ENCODE measurements at regions of chr14 and their contacts with region 1.

Region 1: DNA sequence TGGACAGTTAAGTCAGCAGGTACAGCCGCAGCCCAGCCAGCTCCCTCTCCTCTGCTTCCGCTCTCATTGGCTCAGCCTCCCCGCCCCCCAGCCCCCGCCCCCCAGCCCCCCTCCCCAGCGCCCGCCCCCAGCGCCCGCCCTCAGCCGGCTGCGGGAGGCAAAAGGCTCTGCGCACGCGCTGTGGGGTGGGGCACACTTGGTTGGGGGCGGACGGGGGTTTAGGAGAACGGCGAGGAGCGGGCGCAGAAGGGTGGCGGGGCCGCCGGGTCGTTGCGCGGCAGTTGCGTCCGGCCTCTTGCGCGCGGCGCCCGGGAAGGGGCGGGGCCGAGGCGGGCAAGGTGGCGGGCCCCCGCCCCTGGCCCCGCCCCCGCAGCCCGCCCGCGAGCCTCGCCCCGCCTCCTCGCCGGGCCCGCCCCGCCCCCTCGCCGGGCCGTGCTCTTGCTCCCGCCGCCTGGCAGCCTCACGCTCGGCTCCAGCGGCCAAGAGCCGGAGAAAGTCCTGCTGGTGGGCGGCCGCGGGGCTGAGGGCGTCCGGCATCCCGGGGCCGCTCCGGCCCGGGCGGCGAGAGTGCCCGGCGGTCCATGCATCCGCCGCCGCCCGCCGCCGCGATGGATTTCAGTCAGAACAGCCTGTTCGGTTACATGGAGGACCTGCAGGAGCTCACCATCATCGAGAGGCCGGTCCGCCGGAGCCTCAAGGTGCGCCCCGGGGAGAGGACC is at the start of gene PPP4R4:
- DNase-seq: peak; percentile 96
- ATAC-seq: peak; percentile 89
- H3K4me3 Mint-ChIP-seq: peak within 1 kb of the TSS; percentile 81
- H3K27ac Mint-ChIP-seq: peak within 1 kb of the TSS; percentile 86
- H3K4me1 Mint-ChIP-seq: peaks cover 44% of the 10 kb centered on the region
- H3K27me3 Mint-ChIP-seq: peaks cover 5% of the 10 kb centered on the region
- total RNA-seq, gene PPP4R4: 21.4 TPM

Region 2: DNA sequence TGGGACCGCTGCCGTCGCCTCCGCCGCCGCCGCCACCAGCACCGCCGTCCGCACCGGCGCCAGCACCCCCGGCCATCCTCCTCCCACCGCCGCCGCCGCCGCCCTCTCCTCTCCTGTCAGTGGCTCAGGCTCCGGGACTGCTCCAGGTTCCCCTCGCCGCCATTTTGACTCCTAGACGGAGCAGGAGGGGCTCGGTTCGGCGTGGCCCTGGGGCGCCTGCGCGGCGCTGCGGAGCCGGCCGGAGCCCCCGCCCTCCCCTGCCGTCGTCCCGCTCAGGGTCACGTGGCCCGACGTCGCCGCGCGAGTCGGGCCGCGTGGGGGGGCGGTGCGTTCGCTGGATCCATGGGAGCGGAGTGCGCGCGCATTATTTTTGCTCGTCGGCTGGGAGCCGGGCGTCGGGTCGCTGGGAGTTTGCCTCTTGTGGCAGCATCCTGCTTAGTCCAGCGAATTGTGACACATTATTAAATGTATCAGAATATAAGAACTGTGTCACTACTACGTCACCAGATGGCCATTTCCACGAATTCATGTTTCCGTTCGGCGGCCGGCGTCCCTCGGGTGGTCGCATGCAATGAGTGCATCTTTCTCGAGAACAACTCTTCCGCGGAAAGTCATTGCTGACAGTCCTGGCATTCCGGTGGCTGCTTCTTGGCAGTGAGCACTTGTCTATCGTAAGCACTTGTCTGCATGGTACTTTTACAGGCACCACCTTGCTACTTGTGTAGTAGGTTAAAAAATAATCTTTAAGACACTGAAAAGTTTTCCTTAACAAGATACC is 841.0 kb before region 1 on chr14 and contains the start of gene BTBD7:
- CTCF ChIA-PET with region 1: no interaction called
- POLR2A ChIA-PET with region 1: no interaction called
- intact Hi-C with region 1: loop called in 1 of 2 experiments (anchors 5 kb)
- DNase-seq: peak; percentile 97
- ATAC-seq: peak; percentile 94
- H3K4me3 Mint-ChIP-seq: peak within 1 kb of the TSS; percentile 90
- H3K27ac Mint-ChIP-seq: peak within 1 kb of the TSS; percentile 88
- H3K4me1 Mint-ChIP-seq: peaks cover 46% of the 10 kb centered on the region
- H3K27me3 Mint-ChIP-seq: no peaks in the 10 kb centered on the region
- total RNA-seq, gene BTBD7: 6.5 to 9.5 TPM

Region 3: GRCh38 chr14:93655078-93655750 is 518.8 kb before region 1 on chr14:
- CTCF ChIA-PET with region 1: no interaction called
- POLR2A ChIA-PET with region 1: no interaction called
- intact Hi-C with region 1: no loop called
- DNase-seq: no peak
- ATAC-seq: no peak
- H3K4me3 Mint-ChIP-seq: no peak overlapping the region
- H3K27ac Mint-ChIP-seq: no peak overlapping the region
- H3K4me1 Mint-ChIP-seq: no peaks in the 10 kb centered on the region
- H3K27me3 Mint-ChIP-seq: peaks cover 29% of the 10 kb centered on the region

Region 4: DNA sequence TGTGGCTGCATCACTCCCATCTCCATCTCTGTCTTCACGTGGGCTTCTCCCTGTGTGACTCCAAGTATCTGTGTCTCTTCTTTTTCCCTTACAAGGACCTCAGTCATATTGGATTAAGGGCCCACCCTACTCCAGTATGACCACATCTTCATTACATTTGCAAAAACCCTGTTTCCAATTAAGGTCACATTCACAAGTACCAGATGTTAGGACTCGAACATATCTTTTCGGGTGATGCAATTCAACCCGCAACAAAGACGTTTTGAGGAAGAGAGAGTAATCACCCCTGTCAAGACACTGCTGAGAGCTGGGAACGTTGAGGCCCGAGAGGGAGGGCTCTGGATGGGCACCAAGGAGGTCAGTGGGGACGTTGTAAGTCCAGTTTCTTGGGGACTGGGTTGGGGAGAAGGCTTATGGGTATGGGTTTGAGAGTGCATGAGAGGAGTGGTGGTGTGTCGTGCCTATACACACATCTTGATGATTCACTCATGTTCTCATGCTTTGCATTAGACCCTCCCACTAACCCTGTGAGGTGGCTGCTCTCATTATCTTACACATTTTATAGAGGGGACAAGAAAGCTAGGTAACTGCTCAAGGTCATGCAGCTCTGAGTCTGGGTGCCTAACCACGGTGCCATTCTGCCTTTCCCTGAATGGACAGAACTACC is 75.6 kb before region 1 on chr14:
- CTCF ChIA-PET with region 1: no interaction called
- POLR2A ChIA-PET with region 1: no interaction called
- intact Hi-C with region 1: no loop called
- DNase-seq: no peak
- ATAC-seq: no peak
- H3K4me3 Mint-ChIP-seq: no peak overlapping the region
- H3K27ac Mint-ChIP-seq: no peak overlapping the region
- H3K4me1 Mint-ChIP-seq: no peaks in the 10 kb centered on the region
- H3K27me3 Mint-ChIP-seq: no peaks in the 10 kb centered on the region

Region 5: DNA sequence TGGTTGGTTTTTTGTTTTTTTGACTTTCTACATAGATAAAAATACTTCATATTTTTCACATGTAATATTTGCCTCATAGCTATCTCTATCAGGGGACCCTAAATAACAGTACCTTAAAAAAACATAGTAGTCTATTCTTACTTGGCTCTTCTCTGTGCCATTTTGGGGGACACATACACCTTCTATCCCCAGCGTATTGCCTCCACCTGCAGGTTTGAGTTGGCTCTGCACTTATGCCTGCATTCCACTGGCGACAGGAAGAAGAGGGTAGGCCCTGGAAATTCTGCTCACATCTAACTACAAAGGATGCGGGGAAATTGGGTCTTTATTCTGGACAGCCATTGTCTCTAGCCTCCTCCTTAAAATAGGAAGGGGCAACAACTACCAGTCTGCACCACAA is 30.8 kb before region 1 on chr14:
- CTCF ChIA-PET with region 1: interaction called, 76 read pairs
- POLR2A ChIA-PET with region 1: interaction called, 10 read pairs
- intact Hi-C with region 1: no loop called
- DNase-seq: peak; percentile 44
- ATAC-seq: peak; percentile 60
- H3K4me3 Mint-ChIP-seq: no peak overlapping the region
- H3K27ac Mint-ChIP-seq: no peak overlapping the region
- H3K4me1 Mint-ChIP-seq: peaks cover 16% of the 10 kb centered on the region
- H3K27me3 Mint-ChIP-seq: no peaks in the 10 kb centered on the region

Region 6: DNA sequence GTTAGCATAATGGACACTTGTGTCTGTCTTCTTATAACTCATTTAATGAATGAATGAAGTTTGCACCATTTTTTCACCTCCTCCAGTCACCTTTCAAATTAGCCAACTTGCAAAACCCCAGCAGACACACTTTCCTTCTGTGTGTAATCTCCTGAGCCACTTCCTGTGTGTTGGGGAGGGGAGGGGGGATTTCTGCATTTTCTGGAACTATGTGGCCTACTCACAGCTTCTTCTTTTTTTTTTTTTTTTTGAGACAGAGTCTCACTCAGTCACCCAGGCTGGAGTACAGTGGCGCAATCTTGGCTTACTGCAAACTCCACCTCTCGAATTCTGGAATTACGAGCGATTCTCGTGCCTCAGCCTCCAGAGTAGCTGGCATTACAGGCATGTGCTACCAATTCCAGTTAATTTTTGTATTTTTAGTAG is 218.5 kb after region 1 on chr14:
- CTCF ChIA-PET with region 1: no interaction called
- POLR2A ChIA-PET with region 1: interaction called, 3 read pairs
- intact Hi-C with region 1: loop called in 1 of 2 experiments (anchors 1 kb)
- DNase-seq: peak; percentile 84
- ATAC-seq: peak; percentile 67
- H3K4me3 Mint-ChIP-seq: no peak overlapping the region
- H3K27ac Mint-ChIP-seq: peak overlapping the region; percentile 97
- H3K4me1 Mint-ChIP-seq: peaks cover 70% of the 10 kb centered on the region
- H3K27me3 Mint-ChIP-seq: peaks cover 5% of the 10 kb centered on the region

Measured in activated CD4-positive, alpha-beta T cell treated with anti-CD3 and anti-CD28 coated beads for 36 hours (primary cell).